CD14-positive monocyte (primary cell): ENCODE measurements at regions of chr22 and their contacts with region 1.

Region 1: GRCh38 chr22:31001124-31001770 is 32.2 kb downstream of the TUG1 start:
- DNase-seq: no peak
- H3K4me3 ChIP-seq: no peak overlapping the region
- H3K4me3 Mint-ChIP-seq: no peak overlapping the region
- H3K27ac ChIP-seq: no peak overlapping the region
- H3K27ac Mint-ChIP-seq: no peak overlapping the region
- H3K4me1 ChIP-seq: peaks cover 16 to 18% of the 10 kb centered on the region in 2 donors
- H3K4me1 Mint-ChIP-seq: peaks cover 12% of the 10 kb centered on the region
- H3K27me3 ChIP-seq: no peaks in the 10 kb centered on the region
- H3K27me3 Mint-ChIP-seq: peaks cover 2 to 9% (median 8%) of the 10 kb centered on the region in 3 donors
- CTCF ChIP-seq: no peak

Region 2: DNA sequence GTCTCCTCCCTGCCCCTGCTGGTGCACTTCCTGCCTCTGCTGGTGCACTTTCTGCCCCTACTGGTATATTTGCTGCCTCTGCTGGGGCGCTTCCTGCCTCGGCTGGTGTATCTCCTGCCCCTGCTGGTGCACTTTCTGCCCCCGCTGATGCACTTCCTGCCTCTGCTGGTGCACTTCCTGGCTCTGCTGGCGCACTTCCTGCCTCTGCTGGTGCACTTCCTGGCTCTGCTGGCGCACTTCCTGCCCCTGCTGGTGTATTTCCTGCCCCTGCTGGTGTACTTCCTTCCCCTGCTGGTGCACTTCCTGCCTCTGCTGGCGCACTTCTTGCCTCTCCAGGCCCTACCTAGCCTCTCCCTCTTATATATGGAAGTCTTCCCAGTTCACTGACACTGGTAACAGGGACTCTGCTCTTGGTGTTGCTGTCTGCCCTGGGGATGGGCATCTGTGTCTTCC is 565.5 kb before region 1 on chr22:
- intact Hi-C with region 1: no loop called
- DNase-seq: no peak
- H3K4me3 ChIP-seq: no peak overlapping the region
- H3K4me3 Mint-ChIP-seq: peak overlapping the region in 1 of 2 donors; percentile 11
- H3K27ac ChIP-seq: no peak overlapping the region
- H3K27ac Mint-ChIP-seq: peak overlapping the region in 3 of 7 donors; percentile 8 to 75 (median 40)
- H3K4me1 ChIP-seq: peaks cover 5 to 6% of the 10 kb centered on the region in 2 donors
- H3K4me1 Mint-ChIP-seq: peaks cover 8% of the 10 kb centered on the region
- H3K27me3 ChIP-seq: peaks cover 9 to 25% of the 10 kb centered on the region in 2 donors
- H3K27me3 Mint-ChIP-seq: peaks cover 27 to 39% (median 37%) of the 10 kb centered on the region in 3 donors
- CTCF ChIP-seq: no peak

Region 3: DNA sequence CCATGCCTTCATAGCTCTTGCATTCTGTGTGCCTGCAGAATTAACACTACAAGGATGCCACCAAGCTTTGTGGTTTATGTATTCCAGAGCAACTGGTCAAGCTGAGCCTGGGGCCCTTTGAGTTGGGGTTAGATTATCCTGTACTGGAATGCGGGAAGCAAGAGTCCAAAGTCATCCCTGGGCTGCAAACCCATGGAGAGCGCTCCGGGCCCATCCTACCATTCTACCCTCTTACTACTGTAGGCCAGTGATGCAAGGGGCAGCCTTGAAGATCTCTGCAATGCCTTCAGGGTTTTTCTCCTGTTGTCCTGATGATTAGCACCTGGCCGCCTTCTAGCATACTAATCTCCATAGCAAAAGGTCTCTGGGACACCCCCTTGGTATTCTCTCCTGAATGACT is 19.1 kb after region 1 on chr22:
- intact Hi-C with region 1: loop called in 1 of 2 experiments (anchors 2 kb)
- DNase-seq: no peak
- H3K4me3 ChIP-seq: no peak overlapping the region
- H3K4me3 Mint-ChIP-seq: no peak overlapping the region
- H3K27ac ChIP-seq: no peak overlapping the region
- H3K27ac Mint-ChIP-seq: no peak overlapping the region
- H3K4me1 ChIP-seq: no peaks in the 10 kb centered on the region
- H3K4me1 Mint-ChIP-seq: peaks cover 10% of the 10 kb centered on the region
- H3K27me3 ChIP-seq: no peaks in the 10 kb centered on the region
- H3K27me3 Mint-ChIP-seq: peaks cover 5 to 10% (median 8%) of the 10 kb centered on the region in 3 donors
- CTCF ChIP-seq: no peak

Region 4: DNA sequence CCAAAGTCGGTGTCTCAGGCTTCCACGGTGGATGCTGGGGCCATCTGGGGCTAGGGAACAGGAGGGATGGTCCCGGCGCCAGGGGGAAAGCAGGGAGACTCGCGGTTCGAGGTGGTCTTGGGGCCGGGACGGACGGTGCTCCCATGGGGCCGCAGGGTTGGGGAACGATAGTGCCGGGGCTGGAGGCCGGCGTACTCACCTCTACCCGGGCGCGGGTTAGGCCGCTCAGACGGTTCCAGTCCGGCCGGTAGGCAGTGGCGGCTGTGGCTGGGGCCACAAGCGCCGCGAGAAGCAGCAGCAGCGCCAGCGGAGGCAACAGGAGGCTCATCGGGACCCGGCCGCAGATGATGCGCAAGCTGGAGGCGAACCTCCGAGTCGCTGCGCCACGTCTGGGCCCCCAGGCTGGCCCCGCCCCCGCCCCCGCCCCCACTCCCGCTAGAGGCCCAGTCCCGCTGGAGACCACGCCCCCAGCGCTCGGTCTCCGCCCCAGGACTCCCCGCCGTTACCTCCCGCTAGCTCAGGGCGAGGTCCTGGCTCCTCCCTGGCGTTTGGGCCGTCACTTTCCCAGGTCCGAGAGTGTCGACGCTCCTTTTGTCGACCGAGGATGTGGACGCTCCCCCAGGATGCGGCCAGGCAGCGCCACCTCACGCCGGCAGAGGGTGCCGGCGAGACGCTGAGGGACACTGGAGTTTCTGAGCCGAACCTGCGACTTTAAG is 106.1 kb after region 1 on chr22 and contains the start of gene SELENOM:
- intact Hi-C with region 1: no loop called
- DNase-seq: peak; percentile 91 to 94 (median 93)
- H3K4me3 ChIP-seq: peak within 1 kb of the TSS; percentile 14 to 60 (median 37)
- H3K4me3 Mint-ChIP-seq: peak within 1 kb of the TSS; percentile 85 to 93
- H3K27ac ChIP-seq: peak within 1 kb of the TSS in 1 of 2 donors; percentile 9
- H3K27ac Mint-ChIP-seq: peak within 1 kb of the TSS; percentile 70 to 88 (median 81)
- H3K4me1 ChIP-seq: peaks cover 12 to 14% of the 10 kb centered on the region in 2 donors
- H3K4me1 Mint-ChIP-seq: peaks cover 11% of the 10 kb centered on the region
- H3K27me3 ChIP-seq: peaks cover 0 to 2% of the 10 kb centered on the region in 2 donors
- H3K27me3 Mint-ChIP-seq: peaks cover 3 to 20% (median 18%) of the 10 kb centered on the region in 3 donors
- CTCF ChIP-seq: peak; percentile 80
- polyA plus RNA-seq, gene SELENOM: 3.2 to 7.6 (median 3.4) TPM